ENCODE measurements at regions of chr6 and their contacts with region 1.

Region 1: DNA sequence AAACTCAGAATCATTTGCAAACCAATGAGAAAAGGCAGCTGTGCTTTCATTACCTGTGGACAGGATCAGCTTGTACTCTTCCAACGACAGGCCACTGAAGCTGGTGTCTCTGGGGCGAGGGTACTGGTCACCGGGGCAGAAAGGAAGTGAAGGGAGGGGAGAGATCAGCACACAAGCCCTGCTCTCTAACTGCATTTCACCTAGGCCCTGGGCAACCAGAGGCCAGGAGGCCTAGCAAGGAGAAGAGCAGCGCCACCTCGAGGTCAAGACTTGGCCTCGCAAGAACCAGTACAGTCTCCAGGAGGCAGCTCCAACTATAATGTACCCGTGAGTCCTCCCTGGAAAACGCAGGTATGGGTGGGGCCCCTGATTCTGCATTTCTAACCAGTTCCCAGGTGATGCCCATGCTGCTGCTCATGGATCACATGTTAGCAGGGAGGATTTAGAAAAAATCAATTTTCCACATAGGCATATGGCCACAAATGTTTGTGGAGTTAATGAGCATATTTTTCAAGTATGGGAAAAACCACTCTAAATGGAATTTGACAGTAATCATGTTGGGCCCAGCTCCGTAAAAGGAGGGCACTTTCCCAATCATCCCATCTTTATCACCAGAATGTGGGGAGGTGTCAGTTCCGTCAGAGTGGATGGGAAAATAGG is 11.0 kb downstream of the UQCC2 start:
- DNase-seq: peak; percentile 90
- ATAC-seq: peak; percentile 89
- H3K4me3 Mint-ChIP-seq: no peak overlapping the region
- H3K27ac Mint-ChIP-seq: peak overlapping the region; percentile 35
- H3K4me1 Mint-ChIP-seq: peaks cover 47% of the 10 kb centered on the region
- H3K27me3 Mint-ChIP-seq: no peaks in the 10 kb centered on the region

Region 2: DNA sequence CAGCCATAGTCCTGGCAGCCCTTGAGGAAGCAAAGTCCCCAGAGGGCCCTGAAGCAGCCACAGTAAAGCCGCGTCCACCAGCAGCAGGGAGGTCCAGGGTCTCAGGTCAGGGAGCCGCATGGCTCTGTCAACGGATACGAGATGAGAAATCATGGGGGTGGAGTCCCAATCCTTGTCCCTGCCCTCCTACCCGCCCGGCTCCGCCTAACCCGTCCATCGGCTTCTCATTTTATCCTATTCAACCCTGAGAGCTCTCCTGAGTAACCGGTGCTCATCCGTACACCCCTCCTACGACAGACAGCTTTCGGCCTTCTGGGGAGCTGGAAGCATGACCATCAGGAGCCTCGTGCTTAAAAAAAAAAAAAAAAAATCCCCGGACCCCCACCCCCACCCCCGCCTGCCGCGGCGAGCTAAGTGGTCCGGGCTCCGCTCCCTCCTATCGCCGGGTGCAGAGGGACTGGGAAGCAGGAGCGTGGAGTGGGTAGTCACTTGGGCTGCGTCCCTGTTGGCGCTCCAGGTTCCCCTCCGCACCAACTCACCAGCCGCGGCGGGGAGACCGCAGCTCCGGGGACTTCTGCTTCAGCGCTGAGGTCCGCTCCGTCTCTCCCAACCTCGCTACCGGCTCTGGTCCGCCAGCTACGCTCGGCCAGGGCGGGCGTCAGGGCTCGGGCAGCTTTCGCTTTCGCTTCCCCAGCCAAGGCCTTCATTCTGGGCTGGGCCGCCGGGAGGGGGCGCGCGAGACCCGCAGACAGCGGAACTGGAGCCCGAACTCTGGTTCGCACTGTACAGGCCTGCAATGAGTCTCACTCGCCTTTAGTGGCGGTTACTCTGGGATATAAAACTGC is 862.2 kb before region 1 on chr6 and contains the start of gene TAP2:
- CTCF ChIA-PET with region 1: no interaction called
- POLR2A ChIA-PET with region 1: no interaction called
- intact Hi-C with region 1: no loop called
- DNase-seq: peak; percentile 99
- ATAC-seq: peak; percentile 82
- H3K4me3 Mint-ChIP-seq: peak within 1 kb of the TSS; percentile 95
- H3K27ac Mint-ChIP-seq: peak within 1 kb of the TSS; percentile 94
- H3K4me1 Mint-ChIP-seq: peaks cover 79% of the 10 kb centered on the region
- H3K27me3 Mint-ChIP-seq: no peaks in the 10 kb centered on the region
- total RNA-seq, gene TAP2: 96.4 to 150 TPM

Region 3: GRCh38 chr6:33633462-33634158 is 66.9 kb before region 1 on chr6:
- CTCF ChIA-PET with region 1: interaction called, 10 read pairs
- POLR2A ChIA-PET with region 1: no interaction called
- intact Hi-C with region 1: loop called in 1 of 2 experiments (anchors 2 kb)
- DNase-seq: peak; percentile 68
- ATAC-seq: peak; percentile 78
- H3K4me3 Mint-ChIP-seq: peak overlapping the region; percentile 71
- H3K27ac Mint-ChIP-seq: peak overlapping the region; percentile 42
- H3K4me1 Mint-ChIP-seq: peaks cover 64% of the 10 kb centered on the region
- H3K27me3 Mint-ChIP-seq: no peaks in the 10 kb centered on the region

Region 4: DNA sequence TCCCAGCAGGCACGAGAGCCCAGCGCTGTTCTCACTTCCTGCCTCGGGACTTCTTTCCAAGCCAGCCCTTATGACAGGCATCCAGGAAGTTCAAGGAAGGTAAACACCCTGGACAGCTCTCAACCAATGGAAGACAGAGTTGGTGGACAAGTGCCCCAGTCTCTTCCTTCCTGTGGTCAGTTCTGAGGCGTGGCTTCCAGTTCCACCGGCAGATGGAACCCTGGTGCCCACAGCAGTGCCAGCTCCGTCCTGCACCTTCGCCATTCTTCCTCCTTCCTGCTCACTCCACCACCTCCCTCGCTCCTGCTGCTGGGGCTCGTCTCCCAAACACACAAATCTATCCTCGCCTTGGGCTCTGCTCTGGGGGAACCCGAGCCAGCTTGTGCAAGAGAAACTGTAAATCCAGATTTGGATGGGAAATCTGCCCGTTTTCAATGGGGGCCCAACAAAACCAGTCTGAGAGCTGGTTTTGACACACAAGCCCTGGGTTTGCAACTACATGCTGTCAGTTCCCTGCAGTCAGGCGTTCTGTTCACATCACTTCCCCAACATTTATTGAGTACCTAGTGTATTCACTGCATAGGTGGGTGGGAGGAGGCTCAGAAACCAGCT is 282.7 kb after region 1 on chr6:
- CTCF ChIA-PET with region 1: no interaction called
- POLR2A ChIA-PET with region 1: no interaction called
- intact Hi-C with region 1: no loop called
- DNase-seq: no peak
- ATAC-seq: no peak
- H3K4me3 Mint-ChIP-seq: no peak overlapping the region
- H3K27ac Mint-ChIP-seq: no peak overlapping the region
- H3K4me1 Mint-ChIP-seq: no peaks in the 10 kb centered on the region
- H3K27me3 Mint-ChIP-seq: no peaks in the 10 kb centered on the region

Measured in activated CD4-positive, alpha-beta T cell treated with anti-CD3 and anti-CD28 coated beads for 36 hours (primary cell).